AG04449 (cell line): ENCODE measurements at regions of chr12 and their contacts with region 1.

Region 1: DNA sequence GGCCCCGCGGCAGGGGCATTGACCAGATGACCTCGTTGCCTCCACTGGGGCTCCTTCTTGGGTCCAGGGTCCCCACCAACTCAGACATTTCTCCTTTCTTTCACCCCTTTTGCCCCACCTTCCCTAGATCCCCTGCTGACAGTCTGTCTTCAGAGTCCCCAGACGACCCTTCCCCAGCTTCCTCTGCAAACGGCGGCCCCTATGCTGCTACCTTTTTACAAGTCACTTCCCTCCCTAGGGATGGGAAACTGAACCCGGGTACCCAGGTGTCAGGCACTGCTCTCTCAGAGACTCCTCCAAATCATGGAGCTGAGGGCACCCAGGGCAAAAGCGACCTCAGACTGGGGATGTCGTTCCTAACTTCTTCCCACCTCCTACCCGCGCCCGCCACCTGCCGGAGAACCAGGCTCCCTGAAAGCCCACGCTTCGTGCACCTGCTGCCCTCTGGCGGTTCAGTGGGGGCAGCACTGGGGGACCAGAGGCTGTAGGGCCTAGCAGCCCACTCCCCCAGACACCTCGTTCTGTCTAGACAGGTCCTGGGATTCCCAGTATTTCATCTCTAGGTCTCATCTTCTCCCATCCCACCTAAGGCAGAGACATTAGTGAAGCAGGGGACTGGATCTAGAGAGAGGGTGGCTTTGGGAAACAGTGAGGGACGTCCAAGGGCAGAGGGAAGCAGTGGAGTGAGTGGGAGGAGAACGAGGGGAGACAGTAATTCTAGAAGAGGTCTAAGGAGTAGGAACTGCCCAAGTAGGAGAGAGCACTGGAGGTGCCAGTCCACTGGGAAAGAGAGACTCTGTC is 4.9 kb downstream of the ZNF385A start:
- DNase-seq: no peak
- H3K4me3 ChIP-seq: peak overlapping the region; percentile 58
- CTCF ChIP-seq: peak; percentile 100

Region 2: DNA sequence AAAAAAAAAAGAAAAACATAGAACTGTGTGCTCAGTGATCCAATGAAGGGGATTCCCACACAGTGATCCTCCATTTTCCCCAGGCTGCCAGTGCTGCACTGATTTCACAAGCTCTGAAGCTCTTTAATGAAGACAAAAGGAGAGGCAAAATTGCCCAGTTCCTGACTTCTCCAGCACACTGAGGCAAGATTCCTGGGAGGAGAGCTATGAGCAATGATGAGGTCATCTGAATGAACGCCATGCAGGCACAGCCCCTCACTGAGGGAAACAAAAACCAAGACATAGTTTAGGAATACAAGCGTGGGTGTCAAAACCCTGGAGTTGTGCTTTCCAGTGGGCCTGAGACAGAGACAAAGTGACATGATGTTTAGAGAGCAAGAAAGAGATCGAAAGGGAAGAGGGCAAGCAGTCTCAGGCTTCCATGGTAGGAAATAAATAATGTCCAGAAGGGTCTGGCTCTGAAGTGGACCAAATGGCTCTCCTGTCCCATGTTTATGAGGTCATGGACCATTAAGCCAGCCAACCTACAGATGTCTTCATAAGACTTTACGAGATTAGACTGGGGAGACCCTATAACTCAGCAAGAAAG is 149.9 kb before region 1 on chr12:
- CTCF ChIA-PET with region 1: interaction called, 19 read pairs
- POLR2A ChIA-PET with region 1: no interaction called
- DNase-seq: peak; percentile 91
- H3K4me3 ChIP-seq: no peak overlapping the region
- CTCF ChIP-seq: no peak

Region 3: DNA sequence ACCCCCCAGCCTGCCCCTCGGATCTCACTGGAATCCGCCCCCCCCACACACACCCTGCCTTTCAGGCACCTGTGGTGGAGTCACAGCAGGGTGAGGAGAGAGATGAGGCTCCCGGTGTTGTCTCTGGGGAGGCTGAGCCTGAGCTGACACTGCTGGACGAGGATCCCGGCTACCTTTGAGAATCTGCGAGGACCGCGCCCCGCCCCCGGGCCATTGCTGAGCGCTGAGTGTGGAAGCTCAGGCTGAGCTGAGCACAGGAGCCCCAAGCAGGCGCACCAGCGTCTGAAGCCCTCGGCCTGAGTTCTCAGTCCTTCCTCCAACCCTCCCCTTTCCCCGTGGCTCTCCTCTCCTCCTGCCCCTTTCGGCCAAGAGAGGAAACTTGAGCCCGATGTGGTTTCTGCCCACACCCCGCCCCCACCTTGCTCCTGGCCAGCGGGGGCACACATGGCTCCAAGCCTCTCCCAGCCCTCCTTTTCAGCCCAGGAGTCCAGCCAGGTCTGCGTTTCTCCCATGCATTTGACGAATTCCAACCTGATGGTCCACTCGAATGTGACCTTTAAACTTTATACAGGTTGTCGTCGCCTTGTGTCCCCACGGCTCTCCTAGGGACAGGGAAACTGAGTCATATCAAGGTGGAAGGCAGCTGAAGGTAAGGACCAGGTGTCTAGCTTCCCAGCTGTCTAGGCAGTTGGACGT is 78.7 kb before region 1 on chr12 and contains the start of gene NFE2:
- CTCF ChIA-PET with region 1: interaction called, 66 read pairs
- POLR2A ChIA-PET with region 1: no interaction called
- DNase-seq: no peak
- H3K4me3 ChIP-seq: peak within 1 kb of the TSS; percentile 49
- CTCF ChIP-seq: peak; percentile 23

Region 4: GRCh38 chr12:54359033-54359761 is 20.4 kb before region 1 on chr12:
- CTCF ChIA-PET with region 1: interaction called, 31 read pairs
- POLR2A ChIA-PET with region 1: interaction called, 4 read pairs
- DNase-seq: peak; percentile 97
- H3K4me3 ChIP-seq: peak overlapping the region; percentile 59
- CTCF ChIP-seq: no peak

Region 5: DNA sequence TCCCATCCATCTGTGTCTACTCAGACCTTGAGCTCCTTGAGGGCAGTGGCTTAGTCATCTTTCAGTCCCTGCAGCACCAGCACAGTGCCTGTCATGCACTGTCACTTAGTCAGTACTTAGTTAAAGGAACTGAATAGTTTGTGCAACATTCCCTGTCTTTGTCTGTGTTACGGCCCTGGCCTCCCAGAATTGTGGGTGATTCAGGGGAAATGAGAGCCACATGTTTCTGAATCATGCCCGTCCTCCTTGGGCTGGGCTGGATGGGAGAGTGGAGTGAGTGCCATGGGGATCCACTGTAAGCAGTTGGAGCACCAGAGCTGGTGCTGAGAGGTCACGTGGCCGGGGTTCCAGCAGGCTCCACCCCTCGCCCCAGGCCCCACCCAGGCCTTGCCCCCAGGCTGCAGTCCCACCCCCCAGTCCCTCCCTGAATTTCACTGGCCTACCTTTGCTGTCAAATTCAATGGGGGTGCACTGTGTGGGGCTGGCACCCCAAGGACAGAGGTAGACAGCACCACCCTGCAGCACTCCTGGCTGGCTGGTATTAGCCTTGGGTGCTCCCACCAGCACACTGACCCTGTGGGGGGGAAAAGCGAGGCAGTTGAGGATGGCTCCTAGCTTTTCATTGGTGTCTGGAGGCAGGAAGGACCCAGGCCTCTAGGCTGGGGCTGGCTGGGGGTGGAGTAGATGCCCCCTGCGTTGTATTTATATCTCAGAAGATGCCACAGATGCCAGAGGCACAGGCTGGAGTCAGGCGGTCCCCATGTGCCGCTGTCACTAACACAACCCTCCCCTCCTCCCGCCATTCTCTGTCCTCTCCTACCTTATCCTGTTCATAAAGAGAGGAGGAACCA is 32.0 kb after region 1 on chr12:
- CTCF ChIA-PET with region 1: interaction called, 333 read pairs
- POLR2A ChIA-PET with region 1: no interaction called
- DNase-seq: peak; percentile 77
- H3K4me3 ChIP-seq: no peak overlapping the region
- CTCF ChIP-seq: no peak

Region 6: GRCh38 chr12:54452628-54453027 is 73.0 kb after region 1 on chr12:
- CTCF ChIA-PET with region 1: interaction called, 152 read pairs
- POLR2A ChIA-PET with region 1: no interaction called
- DNase-seq: no peak
- H3K4me3 ChIP-seq: no peak overlapping the region
- CTCF ChIP-seq: no peak

Region 7: GRCh38 chr12:54546511-54546910 is 166.9 kb after region 1 on chr12:
- CTCF ChIA-PET with region 1: no interaction called
- POLR2A ChIA-PET with region 1: no interaction called
- DNase-seq: no peak
- H3K4me3 ChIP-seq: no peak overlapping the region
- CTCF ChIP-seq: no peak